ENCODE measurements at regions of chr12 and their contacts with region 1.

Region 1: DNA sequence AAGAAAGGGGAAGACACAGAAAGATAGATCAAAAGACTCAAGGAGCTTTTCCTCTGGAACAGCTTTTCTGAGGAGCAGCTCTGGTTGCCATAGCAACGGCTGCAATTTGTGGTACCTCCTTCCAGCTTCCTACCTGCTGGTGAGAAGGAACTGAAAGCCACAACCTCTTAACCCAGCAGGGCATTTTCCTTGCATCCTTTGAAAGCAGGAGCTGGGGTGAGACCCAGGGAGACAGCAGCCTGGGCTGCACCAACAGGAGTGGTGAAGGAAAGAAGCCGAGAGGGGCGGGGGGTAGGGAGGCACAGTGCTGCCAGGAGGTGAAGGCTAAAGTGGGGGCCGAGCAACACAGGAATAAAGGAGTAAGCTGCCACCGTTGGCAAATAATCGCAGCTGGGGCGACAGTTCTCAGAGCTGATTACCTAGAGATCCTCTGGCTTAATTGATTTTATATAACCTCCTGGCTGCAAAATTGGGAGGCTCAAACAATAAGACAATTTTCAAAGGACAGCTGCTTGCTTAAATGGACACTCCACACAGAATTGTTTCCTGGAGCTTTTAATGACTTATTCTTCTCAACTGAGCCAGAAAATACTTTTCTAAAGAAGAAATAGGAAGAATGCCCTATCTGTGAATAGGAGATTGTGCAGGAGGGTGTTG is 129.4 kb downstream of the RPAP3 start:
- DNase-seq: no peak
- ATAC-seq: no peak
- H3K4me3 ChIP-seq: no peak overlapping the region
- H3K4me3 Mint-ChIP-seq: no peak overlapping the region
- H3K27ac ChIP-seq: no peak overlapping the region
- H3K27ac Mint-ChIP-seq: no peak overlapping the region
- H3K4me1 ChIP-seq: no peaks in the 10 kb centered on the region
- H3K4me1 Mint-ChIP-seq: no peaks in the 10 kb centered on the region
- H3K27me3 ChIP-seq: no peaks in the 10 kb centered on the region
- H3K27me3 Mint-ChIP-seq: peaks cover 4 to 11% of the 10 kb centered on the region in 2 donors

Region 2: DNA sequence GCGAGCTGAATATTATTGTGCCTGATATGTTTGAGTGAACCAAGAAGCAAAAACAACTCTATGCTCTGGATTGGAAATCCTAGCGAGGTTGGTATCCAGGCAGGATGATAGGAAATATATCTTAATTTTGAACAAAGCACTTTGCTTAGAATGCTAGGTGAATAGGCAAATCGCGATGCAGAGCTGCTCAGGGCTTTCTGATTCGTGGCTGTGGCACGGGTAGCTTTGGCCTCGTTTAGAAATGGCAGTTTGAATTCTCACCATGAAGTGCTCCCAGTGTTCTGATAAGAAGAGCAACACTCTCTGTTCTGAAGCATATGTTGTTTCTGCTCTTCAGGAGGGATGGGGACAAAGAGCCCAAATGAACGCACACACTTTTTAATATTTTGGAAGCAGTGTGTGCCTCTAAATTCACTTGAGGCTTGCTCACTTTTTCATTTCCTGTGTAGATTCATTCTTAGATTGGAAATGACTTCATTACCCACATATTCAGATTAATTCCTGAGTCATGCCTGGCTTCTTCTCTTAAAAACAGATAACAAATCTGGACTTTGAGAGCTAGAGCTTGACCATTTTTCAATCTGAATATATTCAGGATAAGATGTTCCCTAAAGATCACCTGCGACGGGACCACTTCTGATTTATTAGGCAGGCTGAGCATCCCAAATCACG is 71.5 kb before region 1 on chr12:
- CTCF ChIA-PET with region 1: no interaction called
- POLR2A ChIA-PET with region 1: no interaction called
- DNase-seq: no peak
- ATAC-seq: no peak
- H3K4me3 ChIP-seq: no peak overlapping the region
- H3K4me3 Mint-ChIP-seq: no peak overlapping the region
- H3K27ac ChIP-seq: no peak overlapping the region
- H3K27ac Mint-ChIP-seq: no peak overlapping the region
- H3K4me1 ChIP-seq: no peaks in the 10 kb centered on the region
- H3K4me1 Mint-ChIP-seq: no peaks in the 10 kb centered on the region
- H3K27me3 ChIP-seq: no peaks in the 10 kb centered on the region
- H3K27me3 Mint-ChIP-seq: no peaks in the 10 kb centered on the region

Region 3: GRCh38 chr12:47672068-47672467 is 95.7 kb after region 1 on chr12:
- CTCF ChIA-PET with region 1: no interaction called
- POLR2A ChIA-PET with region 1: no interaction called
- DNase-seq: no peak
- ATAC-seq: no peak
- H3K4me3 ChIP-seq: no peak overlapping the region
- H3K4me3 Mint-ChIP-seq: no peak overlapping the region
- H3K27ac ChIP-seq: no peak overlapping the region
- H3K27ac Mint-ChIP-seq: peak overlapping the region in 1 of 2 donors; percentile 48
- H3K4me1 ChIP-seq: no peaks in the 10 kb centered on the region
- H3K4me1 Mint-ChIP-seq: peaks cover 16 to 29% (median 19%) of the 10 kb centered on the region in 3 donors
- H3K27me3 ChIP-seq: no peaks in the 10 kb centered on the region
- H3K27me3 Mint-ChIP-seq: no peaks in the 10 kb centered on the region

Region 4: DNA sequence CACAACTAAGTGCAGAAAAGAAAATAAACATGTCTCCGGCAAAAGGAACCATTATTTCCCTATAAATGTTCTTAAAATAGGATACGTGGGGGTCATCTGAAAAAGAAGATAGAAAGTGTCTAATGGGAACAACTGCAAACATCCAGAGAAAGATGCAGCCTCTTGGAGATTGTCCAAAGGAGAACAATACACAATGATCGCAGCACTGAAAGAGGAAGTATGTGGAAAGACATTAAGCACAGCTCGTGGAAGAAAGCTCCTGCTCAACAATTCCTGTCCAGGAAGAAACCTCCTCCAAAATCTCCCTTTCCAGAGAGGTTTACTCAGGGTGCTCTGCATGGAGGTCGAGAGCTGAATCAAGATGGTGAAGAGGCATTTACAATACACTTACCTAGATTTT is 995.9 kb after region 1 on chr12:
- CTCF ChIA-PET with region 1: interaction called in 1 of 2 experiments, 11 read pairs
- POLR2A ChIA-PET with region 1: no interaction called
- DNase-seq: no peak
- ATAC-seq: no peak
- H3K4me3 ChIP-seq: no peak overlapping the region
- H3K4me3 Mint-ChIP-seq: no peak overlapping the region
- H3K27ac ChIP-seq: no peak overlapping the region
- H3K27ac Mint-ChIP-seq: no peak overlapping the region
- H3K4me1 ChIP-seq: no peaks in the 10 kb centered on the region
- H3K4me1 Mint-ChIP-seq: peaks cover 0 to 4% (median 0%) of the 10 kb centered on the region in 3 donors
- H3K27me3 ChIP-seq: peaks cover 0 to 3% of the 10 kb centered on the region in 2 experiments
- H3K27me3 Mint-ChIP-seq: peaks cover 11 to 18% of the 10 kb centered on the region in 2 donors